PC-9 (cell line): ENCODE measurements at regions of chr22 and their contacts with region 1.

Region 1: DNA sequence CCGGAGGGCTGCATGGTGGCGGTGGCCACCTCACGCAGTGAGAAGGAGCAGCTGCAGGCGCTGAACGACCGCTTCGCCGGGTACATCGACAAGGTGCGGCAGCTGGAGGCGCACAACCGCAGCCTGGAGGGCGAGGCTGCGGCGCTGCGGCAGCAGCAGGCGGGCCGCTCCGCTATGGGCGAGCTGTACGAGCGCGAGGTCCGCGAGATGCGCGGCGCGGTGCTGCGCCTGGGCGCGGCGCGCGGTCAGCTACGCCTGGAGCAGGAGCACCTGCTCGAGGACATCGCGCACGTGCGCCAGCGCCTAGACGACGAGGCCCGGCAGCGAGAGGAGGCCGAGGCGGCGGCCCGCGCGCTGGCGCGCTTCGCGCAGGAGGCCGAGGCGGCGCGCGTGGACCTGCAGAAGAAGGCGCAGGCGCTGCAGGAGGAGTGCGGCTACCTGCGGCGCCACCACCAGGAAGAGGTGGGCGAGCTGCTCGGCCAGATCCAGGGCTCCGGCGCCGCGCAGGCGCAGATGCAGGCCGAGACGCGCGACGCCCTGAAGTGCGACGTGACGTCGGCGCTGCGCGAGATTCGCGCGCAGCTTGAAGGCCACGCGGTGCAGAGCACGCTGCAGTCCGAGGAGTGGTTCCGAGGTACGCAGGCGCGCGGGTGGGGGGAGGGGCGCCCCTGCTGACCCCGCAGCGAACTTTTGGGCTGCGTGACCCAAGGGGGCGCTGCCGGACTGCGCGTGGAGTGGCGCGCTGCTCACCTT is 670 bp downstream of the NEFH start:
- DNase-seq: peak; percentile 54 to 64
- H3K4me3 ChIP-seq: peak overlapping the region; percentile 50
- H3K27ac ChIP-seq: no peak overlapping the region
- H3K4me1 ChIP-seq: peaks cover 8% of the 10 kb centered on the region; the same call in 1 of the 2 replicates
- H3K27me3 ChIP-seq: no peaks in the 10 kb centered on the region
- CTCF ChIP-seq: no peak

Region 2: DNA sequence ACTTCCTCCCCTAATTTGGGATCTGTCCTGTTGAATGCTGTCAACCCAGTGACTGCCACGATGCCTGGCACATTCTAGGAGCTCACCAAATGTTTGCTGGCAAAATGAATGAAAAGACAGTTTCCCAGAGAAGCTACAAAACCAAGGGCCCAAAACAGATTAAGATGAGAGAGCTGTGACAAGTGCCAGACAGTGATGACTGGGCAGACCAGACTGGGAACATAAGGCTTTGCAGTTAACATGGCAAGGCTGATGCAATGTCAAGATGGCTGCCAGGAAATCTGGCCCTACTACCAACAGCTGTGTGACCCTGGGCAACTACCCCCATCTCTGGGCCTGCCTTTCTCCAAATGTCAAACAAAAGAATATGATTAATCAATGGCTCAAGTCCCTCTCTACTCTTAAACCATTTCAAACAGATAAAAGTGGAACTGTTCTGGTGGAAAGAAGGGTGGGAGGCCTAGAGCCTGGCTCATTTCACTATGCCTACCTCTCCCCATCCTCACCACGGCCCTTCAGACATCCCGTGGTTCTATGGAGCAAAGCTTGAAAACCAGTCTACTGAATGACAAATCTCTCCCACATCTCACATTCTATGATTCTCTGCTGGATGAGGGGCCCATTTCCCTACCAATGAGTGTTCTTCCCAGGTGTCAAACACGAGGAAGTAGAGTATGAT is 105.2 kb before region 1 on chr22:
- CTCF ChIA-PET with region 1: no interaction called
- POLR2A ChIA-PET with region 1: no interaction called
- intact Hi-C with region 1: no loop called
- DNase-seq: no peak
- H3K4me3 ChIP-seq: no peak overlapping the region
- H3K27ac ChIP-seq: peak overlapping the region; percentile 99
- H3K4me1 ChIP-seq: peaks cover 49% of the 10 kb centered on the region
- H3K27me3 ChIP-seq: no peaks in the 10 kb centered on the region
- CTCF ChIP-seq: no peak

Region 3: DNA sequence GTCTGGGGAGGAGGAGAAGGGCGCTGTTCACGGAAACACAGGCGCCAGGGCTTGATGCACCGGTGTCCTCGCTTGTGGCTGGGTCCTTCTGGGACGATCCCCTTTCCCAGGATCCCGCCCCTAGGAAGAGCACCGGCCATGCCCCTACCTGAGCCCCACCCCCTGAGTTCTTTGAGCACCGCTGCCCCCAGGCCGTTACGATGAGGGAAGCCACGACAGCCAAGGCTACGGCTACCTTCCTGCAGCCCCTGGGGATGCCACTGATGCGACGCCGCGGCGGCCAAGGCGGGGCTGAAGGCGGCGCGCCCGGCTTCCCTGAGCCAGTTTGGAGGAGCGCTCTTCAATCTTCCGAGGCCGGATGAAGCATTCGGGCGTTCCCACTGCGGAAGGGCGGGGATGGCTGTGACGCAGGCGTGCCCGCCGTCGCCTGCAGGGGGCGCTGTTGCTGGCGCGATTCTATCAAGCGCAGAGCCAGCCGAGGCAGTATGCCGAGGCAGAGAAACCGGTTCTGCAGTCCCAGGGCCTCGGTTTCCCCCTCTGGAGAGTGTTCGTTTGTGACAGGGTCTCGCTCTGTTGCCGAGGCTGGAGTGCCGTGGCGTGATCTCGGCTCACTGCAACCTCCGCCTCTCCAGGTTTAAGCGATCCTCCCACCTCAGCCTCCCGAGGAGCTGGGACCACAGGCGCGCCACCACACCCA is 10.4 kb before region 1 on chr22:
- CTCF ChIA-PET with region 1: interaction called, 15 read pairs
- POLR2A ChIA-PET with region 1: interaction called, 5 read pairs
- intact Hi-C with region 1: no loop called
- DNase-seq: peak in 1 of 2 experiments; percentile 48
- H3K4me3 ChIP-seq: peak overlapping the region; percentile 43
- H3K27ac ChIP-seq: no peak overlapping the region
- H3K4me1 ChIP-seq: no peaks in the 10 kb centered on the region
- H3K27me3 ChIP-seq: no peaks in the 10 kb centered on the region
- CTCF ChIP-seq: peak; percentile 87

Region 4: DNA sequence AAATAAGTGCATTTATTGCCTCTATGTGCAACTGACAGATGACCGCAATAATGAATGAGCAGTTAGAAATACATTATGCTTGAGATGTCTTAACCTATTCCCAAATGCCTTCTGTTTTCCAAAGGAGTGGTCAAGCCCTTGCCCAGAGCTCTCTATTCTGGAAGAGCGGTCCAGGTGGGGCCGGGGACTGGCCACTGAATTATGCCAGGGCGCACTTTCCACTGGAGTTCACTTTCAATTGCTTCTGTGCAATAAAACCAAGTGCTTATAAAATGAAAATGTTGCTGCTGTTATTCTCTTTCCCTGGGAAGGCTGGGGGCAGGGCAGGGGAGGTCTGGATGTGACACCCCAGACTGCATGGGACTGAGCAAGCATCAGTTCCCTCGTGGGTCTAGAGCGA is 10.3 kb after region 1 on chr22:
- CTCF ChIA-PET with region 1: no interaction called
- POLR2A ChIA-PET with region 1: no interaction called
- intact Hi-C with region 1: no loop called
- DNase-seq: no peak
- H3K4me3 ChIP-seq: no peak overlapping the region
- H3K27ac ChIP-seq: no peak overlapping the region
- H3K4me1 ChIP-seq: no peaks in the 10 kb centered on the region
- H3K27me3 ChIP-seq: no peaks in the 10 kb centered on the region
- CTCF ChIP-seq: no peak